Activated CD4-positive, alpha-beta T cell treated with anti-CD3 and anti-CD28 coated beads, Interleukin-2, amount 10 ng/mL, durations not matched to agents 7 days and 5 days (primary cell): ENCODE measurements at regions of chr1 and their contacts with region 1.

Region 1: GRCh38 chr1:205485338-205486228 is 18.9 kb upstream of the CDK18 start:
- DNase-seq: peak; percentile 71
- H3K4me3 Mint-ChIP-seq: no peak overlapping the region
- H3K27ac Mint-ChIP-seq: no peak overlapping the region
- H3K4me1 Mint-ChIP-seq: peaks cover 18% of the 10 kb centered on the region
- H3K27me3 Mint-ChIP-seq: peaks cover 54% of the 10 kb centered on the region

Region 2: GRCh38 chr1:205354259-205354904 is 131.2 kb before region 1 on chr1:
- CTCF ChIA-PET with region 1: interaction called, 10 read pairs
- POLR2A ChIA-PET with region 1: no interaction called
- DNase-seq: peak; percentile 79
- H3K4me3 Mint-ChIP-seq: no peak overlapping the region
- H3K27ac Mint-ChIP-seq: no peak overlapping the region
- H3K4me1 Mint-ChIP-seq: no peaks in the 10 kb centered on the region
- H3K27me3 Mint-ChIP-seq: peaks cover 6% of the 10 kb centered on the region

Region 3: DNA sequence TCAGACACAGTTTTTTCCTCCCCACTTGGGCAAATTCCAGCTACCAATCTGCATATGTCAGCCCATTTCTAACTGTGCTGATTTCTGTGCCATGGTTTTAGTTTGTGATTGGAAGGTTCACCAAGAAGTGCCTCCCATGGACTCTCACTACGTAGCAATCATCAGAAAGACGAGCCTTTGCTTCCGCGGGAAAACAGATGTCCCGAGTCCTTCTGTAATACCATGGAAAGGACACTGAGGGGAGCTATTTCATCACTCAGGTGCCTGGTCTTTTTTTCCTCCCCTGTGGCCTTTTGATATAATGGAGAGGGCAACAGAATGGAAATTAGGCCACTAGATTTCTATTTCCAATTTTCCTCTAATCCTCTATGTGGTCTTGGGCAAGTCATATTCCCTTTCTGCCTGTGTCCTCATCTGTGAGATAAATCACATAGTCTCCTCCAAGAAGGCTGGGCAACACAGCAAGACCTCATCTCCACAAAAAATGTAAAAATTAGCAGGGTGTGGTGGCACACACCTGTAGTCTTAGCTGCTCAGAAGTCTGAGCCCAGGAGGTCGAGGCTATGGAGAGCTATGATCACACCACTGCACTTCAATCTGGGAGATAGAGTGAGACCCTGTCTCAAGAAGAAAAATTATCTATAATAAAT is 88.5 kb before region 1 on chr1:
- CTCF ChIA-PET with region 1: interaction called, 29 read pairs
- POLR2A ChIA-PET with region 1: no interaction called
- DNase-seq: peak; percentile 25
- H3K4me3 Mint-ChIP-seq: no peak overlapping the region
- H3K27ac Mint-ChIP-seq: no peak overlapping the region
- H3K4me1 Mint-ChIP-seq: no peaks in the 10 kb centered on the region
- H3K27me3 Mint-ChIP-seq: peaks cover 44% of the 10 kb centered on the region